Activated CD4-positive, alpha-beta T cell treated with anti-CD3 and anti-CD28 coated beads for 36 hours (primary cell): ENCODE measurements at regions of chr12 and their contacts with region 1.

Region 1: DNA sequence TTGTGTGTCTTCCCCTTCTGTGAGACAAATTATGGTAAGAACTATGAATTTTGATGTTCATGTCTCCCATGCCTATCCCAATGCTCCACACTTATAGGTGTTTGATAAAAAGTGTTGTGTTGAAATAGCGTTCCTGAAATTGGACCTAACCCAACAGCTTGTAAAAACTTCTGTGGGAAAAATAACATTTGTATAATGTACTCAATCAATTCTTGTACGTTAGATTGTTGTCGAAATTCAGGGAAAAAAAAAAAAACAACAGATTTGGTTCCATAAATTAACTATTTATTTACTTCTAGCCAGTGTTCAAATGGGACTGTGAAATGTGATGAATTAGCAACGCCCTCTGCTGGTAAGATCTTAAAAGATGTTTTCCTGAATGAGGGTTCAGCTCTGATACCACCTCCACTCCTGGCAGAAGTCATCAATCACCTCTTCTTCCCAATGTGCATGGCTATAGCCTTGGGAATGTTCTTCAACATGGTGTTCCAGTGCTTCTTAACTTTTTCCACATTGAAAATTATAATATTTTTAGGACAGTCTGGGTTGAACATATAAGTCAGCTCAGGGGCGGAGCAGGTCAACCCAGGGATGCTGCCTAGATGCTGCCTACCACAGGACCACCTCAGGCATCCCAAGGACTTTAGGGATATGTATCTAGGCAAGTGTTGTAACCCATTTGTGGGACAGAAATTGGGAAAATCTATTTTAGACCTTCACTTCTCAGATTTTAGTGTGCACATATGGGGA is 170.6 kb downstream of the OTOGL start:
- DNase-seq: no peak
- ATAC-seq: peak; percentile 42
- H3K4me3 Mint-ChIP-seq: no peak overlapping the region
- H3K27ac Mint-ChIP-seq: no peak overlapping the region
- H3K4me1 Mint-ChIP-seq: no peaks in the 10 kb centered on the region
- H3K27me3 Mint-ChIP-seq: peaks cover 8% of the 10 kb centered on the region

Region 2: GRCh38 chr12:79407671-79408622 is 862.0 kb before region 1 on chr12:
- CTCF ChIA-PET with region 1: no interaction called
- POLR2A ChIA-PET with region 1: no interaction called
- intact Hi-C with region 1: loop called in 1 of 2 experiments (anchors 5 kb)
- DNase-seq: peak; percentile 32
- ATAC-seq: no peak
- H3K4me3 Mint-ChIP-seq: no peak overlapping the region
- H3K27ac Mint-ChIP-seq: no peak overlapping the region
- H3K4me1 Mint-ChIP-seq: no peaks in the 10 kb centered on the region
- H3K27me3 Mint-ChIP-seq: no peaks in the 10 kb centered on the region

Region 3: DNA sequence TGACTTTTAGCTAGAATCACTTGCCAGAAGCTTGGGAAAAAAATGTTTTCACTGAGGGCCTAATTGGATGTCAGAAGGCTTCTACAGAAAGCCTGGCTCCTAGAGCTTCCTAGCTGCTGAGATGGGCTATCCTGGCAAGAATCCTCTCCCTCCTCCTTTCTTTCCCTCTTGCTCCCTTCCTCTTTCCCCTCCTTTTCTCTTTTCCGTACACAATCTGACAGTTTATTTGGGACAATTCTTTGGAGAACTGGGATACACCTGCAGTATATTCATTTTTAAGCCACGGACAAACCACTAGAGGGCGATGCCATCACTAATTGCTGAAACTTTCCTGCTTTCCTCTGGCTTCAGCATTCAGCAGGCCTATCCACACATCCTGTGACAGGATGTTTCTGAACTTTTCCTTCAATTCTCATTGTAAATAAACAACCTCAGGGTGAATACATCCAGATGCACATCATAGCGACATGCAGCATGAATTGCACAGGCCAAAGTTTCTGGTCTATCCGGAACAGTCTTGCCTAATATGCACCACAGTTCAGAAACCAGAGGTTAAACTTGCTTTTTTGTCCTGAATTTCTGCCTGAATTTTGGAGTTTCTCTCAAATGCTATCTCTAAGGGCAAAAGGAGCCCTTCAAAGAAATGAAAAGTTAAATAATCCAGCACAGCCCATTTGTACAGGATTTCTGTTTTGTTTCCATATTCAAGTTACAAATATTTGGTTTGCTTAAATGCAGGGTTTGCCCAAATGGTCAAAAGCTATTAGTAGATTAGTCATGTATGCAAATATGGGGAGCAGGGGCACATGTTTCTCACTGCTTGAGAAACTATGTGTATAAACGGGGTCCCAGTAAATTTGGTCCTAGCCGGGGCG is 722.0 kb before region 1 on chr12:
- CTCF ChIA-PET with region 1: interaction called, 3 read pairs
- POLR2A ChIA-PET with region 1: no interaction called
- intact Hi-C with region 1: loop called in 1 of 2 experiments (anchors 5 kb)
- DNase-seq: peak; percentile 37
- ATAC-seq: no peak
- H3K4me3 Mint-ChIP-seq: no peak overlapping the region
- H3K27ac Mint-ChIP-seq: no peak overlapping the region
- H3K4me1 Mint-ChIP-seq: no peaks in the 10 kb centered on the region
- H3K27me3 Mint-ChIP-seq: no peaks in the 10 kb centered on the region

Region 4: GRCh38 chr12:79555028-79555930 is 714.7 kb before region 1 on chr12:
- CTCF ChIA-PET with region 1: no interaction called
- POLR2A ChIA-PET with region 1: no interaction called
- intact Hi-C with region 1: loop called in 1 of 2 experiments (anchors 1 kb)
- DNase-seq: no peak
- ATAC-seq: no peak
- H3K4me3 Mint-ChIP-seq: no peak overlapping the region
- H3K27ac Mint-ChIP-seq: no peak overlapping the region
- H3K4me1 Mint-ChIP-seq: no peaks in the 10 kb centered on the region
- H3K27me3 Mint-ChIP-seq: no peaks in the 10 kb centered on the region

Region 5: DNA sequence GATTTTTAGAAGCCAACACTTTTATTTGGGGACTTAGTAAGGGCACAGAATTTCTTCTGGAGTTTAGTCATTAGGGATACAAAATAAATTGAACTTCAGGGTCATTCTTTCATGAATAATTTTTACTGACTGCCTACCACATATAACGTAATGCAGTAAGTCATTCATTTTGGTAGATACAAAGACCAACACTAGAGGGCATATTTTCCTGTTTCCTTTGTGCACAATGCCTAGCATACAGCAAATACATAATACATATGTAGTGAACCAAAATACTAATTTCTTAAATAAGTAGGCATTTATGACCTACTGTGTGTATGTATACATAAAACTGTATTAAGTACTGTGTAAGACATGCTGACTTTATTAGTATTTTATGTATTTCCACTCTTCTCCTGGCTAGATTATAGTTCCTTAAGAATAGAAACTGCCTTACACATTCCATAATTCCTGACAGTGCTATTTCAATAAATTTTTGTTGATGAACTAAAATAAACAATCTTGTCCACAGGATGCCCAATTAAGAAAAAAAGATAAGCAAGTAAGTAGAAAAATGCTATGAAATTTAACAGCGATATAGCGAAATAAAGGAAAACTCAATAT is 383.0 kb before region 1 on chr12:
- CTCF ChIA-PET with region 1: no interaction called
- POLR2A ChIA-PET with region 1: no interaction called
- intact Hi-C with region 1: loop called (anchors 1 to 10 kb)
- DNase-seq: no peak
- ATAC-seq: peak; percentile 82
- H3K4me3 Mint-ChIP-seq: no peak overlapping the region
- H3K27ac Mint-ChIP-seq: no peak overlapping the region
- H3K4me1 Mint-ChIP-seq: peaks cover 66% of the 10 kb centered on the region
- H3K27me3 Mint-ChIP-seq: no peaks in the 10 kb centered on the region

Region 6: GRCh38 chr12:80192087-80192486 is 77.9 kb before region 1 on chr12:
- CTCF ChIA-PET with region 1: interaction called, 7 read pairs
- POLR2A ChIA-PET with region 1: no interaction called
- intact Hi-C with region 1: loop called (anchors 1 to 2 kb)
- DNase-seq: no peak
- ATAC-seq: no peak
- H3K4me3 Mint-ChIP-seq: no peak overlapping the region
- H3K27ac Mint-ChIP-seq: no peak overlapping the region
- H3K4me1 Mint-ChIP-seq: peaks cover 5% of the 10 kb centered on the region
- H3K27me3 Mint-ChIP-seq: peaks cover 2% of the 10 kb centered on the region

Region 7: GRCh38 chr12:80400571-80400991 is 130.6 kb after region 1 on chr12:
- CTCF ChIA-PET with region 1: no interaction called
- POLR2A ChIA-PET with region 1: no interaction called
- intact Hi-C with region 1: no loop called
- DNase-seq: no peak
- ATAC-seq: no peak
- H3K4me3 Mint-ChIP-seq: no peak overlapping the region
- H3K27ac Mint-ChIP-seq: no peak overlapping the region
- H3K4me1 Mint-ChIP-seq: no peaks in the 10 kb centered on the region
- H3K27me3 Mint-ChIP-seq: peaks cover 9% of the 10 kb centered on the region